ENCODE measurements at regions of chrX and their contacts with region 1.

Region 1: GRCh38 chrX:9700555-9700954 is 65.1 kb downstream of the GPR143 start:
- DNase-seq: no peak
- H3K4me3 ChIP-seq: no peak overlapping the region
- H3K27ac ChIP-seq: no peak overlapping the region
- H3K4me1 ChIP-seq: no peaks in the 10 kb centered on the region
- H3K27me3 ChIP-seq: no peaks in the 10 kb centered on the region
- CTCF ChIP-seq: no peak

Region 2: DNA sequence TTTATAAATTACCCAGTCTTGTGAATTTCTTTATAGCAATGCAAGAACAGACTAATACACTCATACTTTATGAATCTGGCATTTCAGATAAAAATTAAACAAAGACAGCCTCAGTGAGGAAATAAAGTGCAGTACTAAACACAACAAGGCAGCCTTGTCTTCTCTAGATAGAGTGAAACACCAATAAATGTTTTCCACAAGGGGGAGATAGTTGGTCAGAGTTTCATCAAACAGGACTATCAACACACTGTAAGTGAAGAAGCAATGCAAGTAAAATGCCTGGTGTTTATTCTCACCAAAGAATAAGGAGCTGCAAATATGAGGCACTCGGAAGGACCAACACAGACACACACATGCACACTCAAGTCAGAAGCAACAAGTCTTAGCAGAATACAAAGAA is 729.4 kb before region 1 on chrX:
- intact Hi-C with region 1: loop called (anchors 5 kb)
- DNase-seq: no peak
- H3K4me3 ChIP-seq: no peak overlapping the region
- H3K27ac ChIP-seq: no peak overlapping the region
- H3K4me1 ChIP-seq: no peaks in the 10 kb centered on the region
- H3K27me3 ChIP-seq: no peaks in the 10 kb centered on the region
- CTCF ChIP-seq: peak; percentile 49

Region 3: GRCh38 chrX:9824554-9824953 is 124.0 kb after region 1 on chrX:
- intact Hi-C with region 1: no loop called
- DNase-seq: no peak
- H3K4me3 ChIP-seq: no peak overlapping the region
- H3K27ac ChIP-seq: no peak overlapping the region
- H3K4me1 ChIP-seq: no peaks in the 10 kb centered on the region
- H3K27me3 ChIP-seq: no peaks in the 10 kb centered on the region
- CTCF ChIP-seq: no peak

Region 4: DNA sequence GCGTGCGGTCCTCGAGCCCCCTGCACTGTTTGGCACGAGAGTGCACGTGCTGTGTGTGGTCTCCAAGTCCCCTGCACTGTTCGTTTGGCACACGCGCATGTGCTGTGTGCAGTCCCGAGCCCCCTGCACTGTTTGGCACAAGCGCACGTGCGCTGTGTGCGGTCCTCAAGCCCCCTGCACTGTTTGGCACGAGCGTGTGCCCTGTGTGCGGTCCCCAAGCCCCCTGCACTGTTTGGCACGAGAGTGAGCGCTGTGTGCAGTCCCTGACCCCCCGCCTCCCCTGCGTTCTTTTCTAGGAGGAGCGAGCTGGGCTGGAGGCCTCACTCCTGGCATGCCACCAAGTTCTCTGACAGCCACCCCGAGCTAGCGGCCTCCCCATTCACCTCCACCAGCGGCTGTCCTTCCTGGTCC is 190.1 kb after region 1 on chrX:
- intact Hi-C with region 1: no loop called
- DNase-seq: no peak
- H3K4me3 ChIP-seq: no peak overlapping the region
- H3K27ac ChIP-seq: no peak overlapping the region
- H3K4me1 ChIP-seq: no peaks in the 10 kb centered on the region
- H3K27me3 ChIP-seq: no peaks in the 10 kb centered on the region
- CTCF ChIP-seq: no peak